PC-9 (cell line): ENCODE measurements at regions of chr9 and their contacts with region 1.

Region 1: GRCh38 chr9:109950710-109951443 is 170.9 kb downstream of the PALM2AKAP2 start:
- DNase-seq: no peak
- H3K4me3 ChIP-seq: no peak overlapping the region
- H3K27ac ChIP-seq: no peak overlapping the region
- H3K4me1 ChIP-seq: no peaks in the 10 kb centered on the region
- H3K27me3 ChIP-seq: no peaks in the 10 kb centered on the region
- CTCF ChIP-seq: no peak

Region 2: DNA sequence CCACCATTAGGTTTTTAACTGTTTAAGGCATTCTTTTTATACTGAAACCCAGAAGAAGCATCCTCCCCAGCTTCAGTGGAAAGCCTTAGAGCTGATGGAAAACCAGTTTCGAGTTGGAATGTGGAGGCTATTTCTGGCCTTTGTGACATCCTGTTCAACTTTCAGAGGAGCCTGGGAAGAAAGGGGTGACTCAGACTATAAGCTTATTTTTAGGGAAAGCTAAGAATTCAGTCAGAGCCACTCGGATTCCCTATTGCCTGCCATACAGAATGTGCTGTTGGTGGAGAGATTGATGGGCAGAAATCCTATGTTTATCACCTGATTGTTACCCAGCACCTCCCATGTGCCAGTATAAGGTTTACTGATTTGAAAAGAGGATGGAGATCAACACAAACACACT is 151.1 kb before region 1 on chr9:
- CTCF ChIA-PET with region 1: no interaction called
- POLR2A ChIA-PET with region 1: no interaction called
- intact Hi-C with region 1: no loop called
- DNase-seq: no peak
- H3K4me3 ChIP-seq: no peak overlapping the region
- H3K27ac ChIP-seq: no peak overlapping the region
- H3K4me1 ChIP-seq: peaks cover 8% of the 10 kb centered on the region
- H3K27me3 ChIP-seq: no peaks in the 10 kb centered on the region
- CTCF ChIP-seq: no peak

Region 3: GRCh38 chr9:109996936-109997580 is 46.2 kb after region 1 on chr9:
- CTCF ChIA-PET with region 1: interaction called, 12 read pairs
- POLR2A ChIA-PET with region 1: no interaction called
- intact Hi-C with region 1: no loop called
- DNase-seq: no peak
- H3K4me3 ChIP-seq: no peak overlapping the region
- H3K27ac ChIP-seq: no peak overlapping the region
- H3K4me1 ChIP-seq: no peaks in the 10 kb centered on the region
- H3K27me3 ChIP-seq: no peaks in the 10 kb centered on the region
- CTCF ChIP-seq: no peak